B cell (primary cell): ENCODE measurements at regions of chr9 and their contacts with region 1.

Region 1: GRCh38 chr9:112726428-112726827 is 8.5 kb upstream of the INIP start:
- DNase-seq: peak; percentile 30
- ATAC-seq: peak; percentile 63
- H3K4me3 ChIP-seq: no peak overlapping the region
- H3K4me3 Mint-ChIP-seq: no peak overlapping the region
- H3K27ac ChIP-seq: peak overlapping the region; percentile 4 to 41
- H3K27ac Mint-ChIP-seq: peak overlapping the region; percentile 12
- H3K4me1 ChIP-seq: peaks cover 19 to 21% of the 10 kb centered on the region in 2 donors
- H3K4me1 Mint-ChIP-seq: peaks cover 23% of the 10 kb centered on the region
- H3K27me3 ChIP-seq: no peaks in the 10 kb centered on the region
- H3K27me3 Mint-ChIP-seq: no peaks in the 10 kb centered on the region
- CTCF ChIP-seq: no peak

Region 2: GRCh38 chr9:112348257-112349007 is 378.0 kb before region 1 on chr9:
- CTCF ChIA-PET with region 1: no interaction called
- POLR2A ChIA-PET with region 1: no interaction called
- intact Hi-C with region 1: no loop called
- DNase-seq: peak; percentile 74
- ATAC-seq: peak; percentile 63
- H3K4me3 ChIP-seq: peak overlapping the region; percentile 40 to 62 (median 45)
- H3K4me3 Mint-ChIP-seq: peak overlapping the region; percentile 86
- H3K27ac ChIP-seq: no peak overlapping the region
- H3K27ac Mint-ChIP-seq: peak overlapping the region; percentile 75
- H3K4me1 ChIP-seq: peaks cover 5 to 9% of the 10 kb centered on the region in 2 donors
- H3K4me1 Mint-ChIP-seq: peaks cover 12% of the 10 kb centered on the region
- H3K27me3 ChIP-seq: peaks cover 0 to 3% (median 0%) of the 10 kb centered on the region in 4 experiments
- H3K27me3 Mint-ChIP-seq: no peaks in the 10 kb centered on the region
- CTCF ChIP-seq: no peak

Region 3: DNA sequence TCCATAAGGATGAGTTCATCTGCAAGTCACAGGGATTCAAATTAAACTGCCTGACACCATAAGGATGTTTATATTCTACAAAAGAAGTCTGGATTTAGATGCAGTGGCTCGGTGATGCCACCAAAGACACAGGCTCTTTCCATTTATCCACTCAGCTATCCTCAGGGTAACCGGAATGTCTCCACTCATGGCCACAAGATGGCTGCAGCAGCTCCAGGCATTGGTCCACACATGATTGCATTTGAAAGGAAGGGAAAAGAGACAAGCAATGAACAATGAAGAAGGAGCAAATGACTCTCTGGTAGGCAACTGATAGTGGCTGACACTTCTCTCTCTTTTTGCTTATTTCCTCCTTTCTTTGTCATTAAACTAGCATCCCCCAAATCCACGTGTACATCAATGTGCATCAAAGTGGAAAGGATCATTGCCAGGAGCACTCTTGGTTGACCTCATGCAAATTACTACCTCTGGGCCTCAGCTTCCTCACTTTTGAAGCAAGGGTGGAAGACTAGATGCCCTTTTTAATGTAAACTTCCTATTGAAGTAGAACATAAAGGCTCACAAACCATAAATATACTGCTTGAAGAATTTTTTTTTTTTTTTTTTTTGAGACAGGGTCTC is 16.9 kb after region 1 on chr9:
- CTCF ChIA-PET with region 1: no interaction called
- POLR2A ChIA-PET with region 1: interaction called, 12 read pairs
- intact Hi-C with region 1: no loop called
- DNase-seq: peak; percentile 79
- ATAC-seq: peak; percentile 83
- H3K4me3 ChIP-seq: no peak overlapping the region
- H3K4me3 Mint-ChIP-seq: peak overlapping the region; percentile 57
- H3K27ac ChIP-seq: no peak overlapping the region
- H3K27ac Mint-ChIP-seq: peak overlapping the region; percentile 59
- H3K4me1 ChIP-seq: peaks cover 28 to 40% of the 10 kb centered on the region in 2 donors
- H3K4me1 Mint-ChIP-seq: peaks cover 40% of the 10 kb centered on the region
- H3K27me3 ChIP-seq: peaks cover 0 to 3% (median 1%) of the 10 kb centered on the region in 4 experiments
- H3K27me3 Mint-ChIP-seq: peaks cover 8% of the 10 kb centered on the region
- CTCF ChIP-seq: no peak